PC-3 (cell line): ENCODE measurements at regions of chr7 and their contacts with region 1.

Region 1: GRCh38 chr7:16071246-16071857 is 350.0 kb downstream of the CRPPA start:
- DNase-seq: peak; percentile 83
- ATAC-seq: peak; percentile 72; the same call in 1 of the 2 replicates
- H3K4me3 ChIP-seq: no peak overlapping the region
- H3K27ac ChIP-seq: no peak overlapping the region
- H3K4me1 ChIP-seq: peaks cover 6% of the 10 kb centered on the region; the same call in 1 of the 2 replicates
- H3K27me3 ChIP-seq: no peaks in the 10 kb centered on the region
- CTCF ChIP-seq: peak; percentile 77

Region 2: GRCh38 chr7:15305002-15305600 is 766.3 kb before region 1 on chr7:
- CTCF ChIA-PET with region 1: no interaction called
- POLR2A ChIA-PET with region 1: no interaction called
- intact Hi-C with region 1: loop called (anchors 1 kb)
- DNase-seq: peak; percentile 62
- ATAC-seq: no peak
- H3K4me3 ChIP-seq: no peak overlapping the region
- H3K27ac ChIP-seq: no peak overlapping the region
- H3K4me1 ChIP-seq: no peaks in the 10 kb centered on the region
- H3K27me3 ChIP-seq: no peaks in the 10 kb centered on the region
- CTCF ChIP-seq: peak; percentile 66

Region 3: DNA sequence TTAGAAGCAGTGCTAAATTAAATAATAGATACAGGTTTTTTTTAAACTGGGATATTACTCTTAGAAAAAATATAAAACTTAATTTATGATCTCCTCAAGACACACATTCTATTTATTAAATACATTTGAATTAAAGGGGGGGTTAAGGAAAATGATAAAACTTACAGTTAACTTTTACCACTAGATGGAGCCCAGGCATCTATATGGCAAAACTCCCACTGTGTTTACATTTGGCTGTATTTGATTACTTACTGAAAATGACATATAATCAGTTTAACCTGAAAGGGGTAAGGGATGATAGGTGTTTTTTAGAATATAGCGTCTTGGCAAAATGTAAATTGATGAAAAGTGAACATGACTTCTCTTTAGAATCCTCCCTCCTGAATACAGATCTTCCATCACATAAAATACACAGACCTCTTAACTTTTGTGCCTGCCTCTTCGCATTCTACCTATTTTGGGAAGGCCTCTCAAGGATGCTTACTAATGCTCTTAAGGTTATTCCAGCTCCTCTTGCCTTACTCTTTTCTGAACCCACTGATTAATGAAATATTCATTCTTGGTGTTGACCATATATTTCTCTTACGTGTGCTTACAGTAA is 745.2 kb before region 1 on chr7:
- CTCF ChIA-PET with region 1: no interaction called
- POLR2A ChIA-PET with region 1: no interaction called
- intact Hi-C with region 1: loop called (anchors 1 kb)
- DNase-seq: peak; percentile 59
- ATAC-seq: peak; percentile 53; the same call in 1 of the 2 replicates
- H3K4me3 ChIP-seq: no peak overlapping the region
- H3K27ac ChIP-seq: no peak overlapping the region
- H3K4me1 ChIP-seq: no peaks in the 10 kb centered on the region
- H3K27me3 ChIP-seq: peaks cover 5% of the 10 kb centered on the region
- CTCF ChIP-seq: peak; percentile 77